Motor neuron (in vitro differentiated cells): ENCODE measurements at regions of chr18 and their contacts with region 1.

Region 1: DNA sequence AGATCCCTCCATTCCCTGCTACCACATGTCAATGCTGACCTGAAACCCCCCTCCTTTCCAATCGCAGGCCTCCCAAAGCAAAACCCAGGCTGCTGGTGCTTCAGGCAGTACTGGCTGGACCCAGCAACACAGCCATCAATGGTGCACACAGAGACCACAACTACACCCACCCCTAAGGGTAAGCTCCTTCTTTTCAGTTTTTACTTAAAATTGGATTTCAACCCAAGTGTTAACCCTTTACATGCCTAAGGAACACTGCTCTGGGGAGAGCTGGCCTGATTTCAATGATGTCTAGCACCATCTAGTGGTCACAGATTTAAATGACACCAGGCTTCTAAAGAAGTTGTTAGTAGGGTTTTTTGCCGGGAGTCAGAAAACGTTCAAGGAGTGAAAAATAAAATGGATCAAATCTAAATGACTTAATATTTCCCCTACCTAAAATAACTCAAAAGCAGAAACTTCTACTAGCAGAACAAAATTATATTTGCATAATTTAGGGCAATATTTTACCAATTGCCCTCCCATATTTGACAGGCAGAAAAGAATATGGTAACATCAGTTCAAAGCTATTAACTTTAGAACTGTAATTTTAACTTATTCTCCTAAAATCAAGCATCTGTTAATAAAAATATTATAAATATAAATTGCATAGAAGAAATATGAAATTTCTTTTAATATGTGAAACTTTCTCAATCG is 24.6 kb downstream of the FECH start:
- ATAC-seq: peak; percentile 26 to 61 (median 50)
- H3K4me3 ChIP-seq: no peak overlapping the region
- H3K27ac ChIP-seq: no peak overlapping the region
- H3K4me1 ChIP-seq: peaks cover 5 to 10% of the 10 kb centered on the region in 2 donors

Region 2: DNA sequence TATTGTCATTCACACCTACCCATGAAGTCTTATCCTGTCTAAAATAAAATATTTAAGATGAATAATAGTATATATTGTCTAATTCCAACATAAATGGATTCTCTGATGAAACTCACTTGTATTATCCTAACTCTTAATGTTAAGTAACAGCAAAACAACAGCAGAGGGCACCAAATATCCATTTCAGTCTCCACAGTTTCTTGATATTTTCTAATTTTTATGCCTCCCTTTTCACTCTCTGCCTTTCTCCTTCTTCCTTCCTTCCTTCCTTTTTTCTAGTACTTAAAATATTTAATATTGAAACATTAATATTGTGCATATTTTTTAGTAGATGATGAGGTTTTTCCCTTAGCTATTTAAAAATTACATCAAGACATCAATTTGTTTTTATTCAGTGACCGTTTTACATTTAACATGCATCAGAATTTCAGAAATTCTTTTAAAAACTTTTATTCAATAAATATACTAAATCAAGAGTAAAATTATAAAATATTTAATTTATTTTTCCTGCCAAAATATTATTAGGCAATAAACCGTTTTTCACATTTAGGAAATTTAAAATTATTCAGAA is 813.1 kb before region 1 on chr18:
- in situ Hi-C with region 1: loop called in 3 of 9 experiments (anchors 25 kb)
- ATAC-seq: peak in 1 of 8 experiments; percentile 25
- H3K4me3 ChIP-seq: no peak overlapping the region
- H3K27ac ChIP-seq: no peak overlapping the region
- H3K4me1 ChIP-seq: no peaks in the 10 kb centered on the region

Region 3: GRCh38 chr18:56789004-56789888 is 772.6 kb before region 1 on chr18:
- in situ Hi-C with region 1: loop called in 1 of 9 experiments (anchors 25 kb)
- ATAC-seq: peak in 5 of 8 experiments; percentile 14 to 71 (median 43)
- H3K4me3 ChIP-seq: no peak overlapping the region
- H3K27ac ChIP-seq: no peak overlapping the region
- H3K4me1 ChIP-seq: peaks cover 19 to 44% of the 10 kb centered on the region in 2 donors